Psoas muscle (tissue), 8 donors: ENCODE measurements at regions of chr16 and their contacts with region 1.

Region 1: GRCh38 chr16:24036614-24037013 is 200.8 kb downstream of the PRKCB start:
- DNase-seq: no peak
- ATAC-seq: peak in 1 of 4 donors; percentile 49
- H3K4me3 ChIP-seq: no peak overlapping the region
- H3K27ac ChIP-seq: no peak overlapping the region
- H3K4me1 ChIP-seq: no peaks in the 10 kb centered on the region
- H3K27me3 ChIP-seq: no peaks in the 10 kb centered on the region
- CTCF ChIP-seq: peak; percentile 49

Region 2: GRCh38 chr16:23185656-23186055 is 851.0 kb before region 1 on chr16:
- intact Hi-C with region 1: no loop called
- DNase-seq: no peak
- ATAC-seq: no peak
- H3K4me3 ChIP-seq: no peak overlapping the region
- H3K27ac ChIP-seq: no peak overlapping the region
- H3K4me1 ChIP-seq: peaks cover 10% of the 10 kb centered on the region
- H3K27me3 ChIP-seq: peaks cover 0 to 44% (median 7%) of the 10 kb centered on the region in 3 donors
- CTCF ChIP-seq: no peak

Region 3: GRCh38 chr16:23678430-23679273 is 358.0 kb before region 1 on chr16 and contains the start of gene PLK1:
- intact Hi-C with region 1: loop called in 1 of 2 experiments (anchors 10 kb)
- DNase-seq: peak; percentile 77 to 83
- ATAC-seq: peak; percentile 87 to 96 (median 90)
- H3K4me3 ChIP-seq: peak within 1 kb of the TSS; percentile 65
- H3K27ac ChIP-seq: no peak within 1 kb of the TSS
- H3K4me1 ChIP-seq: peaks cover 4% of the 10 kb centered on the region
- H3K27me3 ChIP-seq: no peaks in the 10 kb centered on the region
- CTCF ChIP-seq: peak; percentile 8
- total RNA-seq, gene PLK1: 0.58 to 0.98 (median 0.82) TPM

Region 4: DNA sequence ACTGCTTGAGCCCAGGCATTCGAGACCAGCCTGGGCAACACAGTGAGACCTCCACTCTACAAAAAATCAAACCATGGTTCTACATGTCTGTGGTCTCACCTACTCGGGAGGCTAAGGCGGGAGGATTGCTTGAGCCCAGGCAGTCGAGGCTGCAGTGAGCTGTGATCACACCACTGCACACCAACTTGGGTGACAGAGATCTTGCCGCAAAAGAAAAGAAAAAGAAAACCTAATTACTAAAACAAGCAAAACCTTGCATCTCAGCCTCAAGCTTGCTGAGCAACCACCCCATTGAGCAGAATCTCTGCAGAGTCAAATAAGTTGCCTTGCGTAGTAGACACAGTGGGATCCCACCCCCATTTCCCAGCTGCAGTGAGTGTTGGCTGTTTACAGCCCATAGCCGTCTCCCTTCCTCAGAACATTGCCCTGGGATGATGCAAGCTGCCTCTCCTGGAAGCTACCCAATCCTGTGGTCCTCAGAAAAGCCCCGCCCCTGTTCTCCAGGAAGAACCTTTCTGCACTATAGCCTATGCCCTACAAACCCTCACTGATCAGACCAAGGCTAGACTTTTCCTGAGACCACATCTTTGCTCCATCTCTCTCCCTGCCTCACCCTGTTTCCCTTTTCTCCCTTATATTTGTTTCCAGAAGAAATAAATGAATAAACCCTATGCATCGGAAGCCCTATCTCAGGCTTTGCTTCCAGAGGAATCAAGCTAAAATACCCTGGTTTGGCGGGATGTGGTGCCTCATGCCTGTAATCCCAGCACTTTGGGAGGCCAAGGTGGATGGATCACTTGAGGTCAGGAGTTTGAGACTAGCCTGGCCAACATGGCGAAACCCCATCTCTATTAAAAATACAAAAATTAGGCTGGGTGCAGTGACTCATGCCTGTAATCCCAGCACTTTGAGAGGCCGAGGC is 306.9 kb before region 1 on chr16:
- intact Hi-C with region 1: loop called in 1 of 2 experiments (anchors 10 kb)
- DNase-seq: no peak
- ATAC-seq: no peak
- H3K4me3 ChIP-seq: no peak overlapping the region
- H3K27ac ChIP-seq: no peak overlapping the region
- H3K4me1 ChIP-seq: no peaks in the 10 kb centered on the region
- H3K27me3 ChIP-seq: no peaks in the 10 kb centered on the region
- CTCF ChIP-seq: no peak

Region 5: GRCh38 chr16:23803591-23804123 is 233.0 kb before region 1 on chr16:
- intact Hi-C with region 1: loop called (anchors 10 kb)
- DNase-seq: peak; percentile 25 to 46
- ATAC-seq: no peak
- H3K4me3 ChIP-seq: no peak overlapping the region
- H3K27ac ChIP-seq: no peak overlapping the region
- H3K4me1 ChIP-seq: no peaks in the 10 kb centered on the region
- H3K27me3 ChIP-seq: no peaks in the 10 kb centered on the region
- CTCF ChIP-seq: no peak

Region 6: GRCh38 chr16:24070851-24071250 is 34.2 kb after region 1 on chr16:
- intact Hi-C with region 1: no loop called
- DNase-seq: no peak
- ATAC-seq: no peak
- H3K4me3 ChIP-seq: no peak overlapping the region
- H3K27ac ChIP-seq: no peak overlapping the region
- H3K4me1 ChIP-seq: no peaks in the 10 kb centered on the region
- H3K27me3 ChIP-seq: no peaks in the 10 kb centered on the region
- CTCF ChIP-seq: no peak